Esophagus muscularis mucosa (tissue), 4 donors: ENCODE measurements at regions of chr1 and their contacts with region 1.

Region 1: GRCh38 chr1:115717541-115717940 is 51.0 kb downstream of the CASQ2 start:
- DNase-seq: no peak
- H3K4me3 ChIP-seq: no peak overlapping the region
- H3K27ac ChIP-seq: no peak overlapping the region
- H3K4me1 ChIP-seq: peaks cover 0 to 7% (median 2%) of the 10 kb centered on the region in 4 donors
- H3K27me3 ChIP-seq: no peaks in the 10 kb centered on the region
- CTCF ChIP-seq: peak; percentile 66 to 69 (median 67)
- EP300 ChIP-seq: no peak
- POLR2A ChIP-seq: no peak

Region 2: GRCh38 chr1:115679141-115679611 is 38.4 kb before region 1 on chr1:
- intact Hi-C with region 1: no loop called
- DNase-seq: no peak
- H3K4me3 ChIP-seq: peak overlapping the region in 1 of 4 donors; percentile 18
- H3K27ac ChIP-seq: peak overlapping the region; percentile 70 to 84 (median 80)
- H3K4me1 ChIP-seq: peaks cover 36 to 51% (median 48%) of the 10 kb centered on the region in 4 donors
- H3K27me3 ChIP-seq: no peaks in the 10 kb centered on the region
- CTCF ChIP-seq: peak in 1 of 3 experiments; percentile 8
- EP300 ChIP-seq: no peak
- POLR2A ChIP-seq: no peak

Region 3: GRCh38 chr1:115771847-115772457 is 54.4 kb after region 1 on chr1:
- intact Hi-C with region 1: loop called (anchors 2 kb)
- DNase-seq: peak; percentile 92
- H3K4me3 ChIP-seq: peak overlapping the region; percentile 15 to 40 (median 36)
- H3K27ac ChIP-seq: peak overlapping the region; percentile 49 to 69 (median 59)
- H3K4me1 ChIP-seq: peaks cover 9 to 33% (median 20%) of the 10 kb centered on the region in 4 donors
- H3K27me3 ChIP-seq: no peaks in the 10 kb centered on the region
- CTCF ChIP-seq: peak; percentile 77 to 82 (median 80)
- EP300 ChIP-seq: no peak
- POLR2A ChIP-seq: no peak

Region 4: DNA sequence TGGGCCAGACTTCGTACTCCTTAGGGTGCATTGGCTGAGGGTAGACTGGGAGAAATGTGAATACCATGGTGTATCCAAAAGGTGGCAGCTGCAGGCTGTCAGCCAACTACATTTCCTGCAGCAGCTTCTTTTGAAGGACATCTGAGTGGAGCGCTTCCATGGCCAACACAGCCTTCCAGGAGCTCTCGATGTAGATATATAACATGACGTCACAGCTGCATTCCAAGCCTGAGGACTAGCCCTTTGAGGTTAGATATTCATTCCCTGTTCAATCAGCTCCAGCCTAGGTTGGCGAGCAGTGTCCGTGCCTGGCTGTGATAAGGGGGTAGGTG is 501.4 kb after region 1 on chr1:
- intact Hi-C with region 1: no loop called
- DNase-seq: no peak
- H3K4me3 ChIP-seq: no peak overlapping the region
- H3K27ac ChIP-seq: no peak overlapping the region
- H3K4me1 ChIP-seq: no peaks in the 10 kb centered on the region
- H3K27me3 ChIP-seq: no peaks in the 10 kb centered on the region
- CTCF ChIP-seq: no peak
- EP300 ChIP-seq: no peak
- POLR2A ChIP-seq: no peak